BJ (cell line): ENCODE measurements at regions of chr5 and their contacts with region 1.

Region 1: GRCh38 chr5:32232441-32233219 is 58.5 kb upstream of the GOLPH3 start:
- DNase-seq: no peak
- H3K4me3 ChIP-seq: no peak overlapping the region
- H3K27me3 ChIP-seq: no peaks in the 10 kb centered on the region
- CTCF ChIP-seq: peak; percentile 78

Region 2: DNA sequence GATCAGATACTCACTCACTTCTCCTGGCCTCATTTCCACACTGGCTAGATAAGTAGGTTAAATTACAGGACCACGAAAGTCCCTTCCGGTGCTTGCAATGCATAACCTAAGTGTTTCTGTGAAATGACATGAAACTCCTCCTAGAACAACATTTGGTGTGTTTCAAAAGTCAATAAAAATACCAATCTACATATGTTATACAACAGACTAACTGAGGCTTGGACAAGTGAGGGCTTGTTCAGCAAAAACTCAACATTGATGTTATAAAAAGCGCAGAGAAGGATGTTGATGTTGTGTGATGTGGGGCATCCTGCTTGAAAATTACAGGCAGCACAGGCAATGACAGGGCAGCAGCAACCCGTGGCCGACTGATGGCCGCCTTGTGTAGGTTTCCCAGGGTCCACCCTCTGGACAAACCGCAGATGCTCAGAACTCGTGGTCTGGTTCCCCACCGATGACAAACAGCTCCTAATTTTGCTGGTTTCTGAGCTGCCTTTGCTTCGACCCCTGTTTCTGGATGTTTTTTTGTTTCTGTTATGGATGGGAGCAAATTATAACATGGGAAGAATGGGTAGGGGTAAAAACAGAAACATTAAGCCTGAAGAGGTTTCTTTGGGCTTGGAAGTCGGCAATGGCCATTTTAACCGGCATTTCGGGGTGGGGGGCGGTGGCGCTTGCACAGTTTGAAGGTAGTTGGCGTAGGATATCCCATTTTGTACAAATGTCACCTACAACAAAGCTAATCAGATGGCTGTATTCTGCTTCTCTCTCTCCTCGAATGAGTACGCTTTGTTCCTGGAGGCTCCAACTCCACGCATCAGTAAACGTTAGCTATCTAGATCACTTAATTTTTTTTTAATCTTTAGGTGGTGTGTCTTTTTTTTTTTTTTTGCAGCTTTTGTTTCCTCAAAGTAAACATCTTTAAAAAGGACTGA is 477.6 kb before region 1 on chr5:
- CTCF ChIA-PET with region 1: no interaction called
- POLR2A ChIA-PET with region 1: no interaction called
- DNase-seq: no peak
- H3K4me3 ChIP-seq: no peak overlapping the region
- H3K27me3 ChIP-seq: peaks cover 5% of the 10 kb centered on the region
- CTCF ChIP-seq: no peak

Region 3: GRCh38 chr5:32163785-32164184 is 68.8 kb before region 1 on chr5:
- CTCF ChIA-PET with region 1: no interaction called
- POLR2A ChIA-PET with region 1: no interaction called
- DNase-seq: no peak
- H3K4me3 ChIP-seq: no peak overlapping the region
- H3K27me3 ChIP-seq: no peaks in the 10 kb centered on the region
- CTCF ChIP-seq: no peak

Region 4: DNA sequence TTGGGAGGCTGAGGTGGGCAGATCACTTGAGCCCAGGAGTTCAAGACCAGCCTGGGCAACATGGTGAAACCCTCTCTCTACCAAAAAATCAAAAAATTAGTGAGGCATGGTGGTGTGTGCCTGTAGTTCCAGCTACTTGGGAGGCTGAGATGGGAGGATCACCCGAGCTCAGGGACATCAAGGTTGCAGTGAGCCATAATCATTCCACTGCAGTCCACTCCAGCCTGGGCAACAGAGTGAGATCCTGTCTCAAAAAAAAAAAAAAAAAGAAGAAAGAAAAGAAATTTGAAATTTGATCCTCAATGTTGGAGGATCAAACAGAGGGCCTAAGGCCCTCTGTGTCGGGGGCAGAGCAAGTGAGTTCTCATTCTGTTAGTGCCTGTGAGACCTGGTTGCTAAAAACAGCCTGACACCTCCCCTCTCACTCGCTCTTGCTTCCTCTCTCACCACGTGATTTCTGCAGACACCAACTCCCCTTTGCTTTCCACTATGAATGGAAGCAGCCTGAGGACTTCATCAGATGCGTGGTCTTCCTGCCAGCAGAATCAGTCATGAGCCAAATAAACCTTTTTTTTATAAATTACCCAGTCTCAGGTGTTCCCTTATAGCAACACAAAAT is 50.1 kb before region 1 on chr5:
- CTCF ChIA-PET with region 1: no interaction called
- POLR2A ChIA-PET with region 1: interaction called, 13 read pairs
- DNase-seq: no peak
- H3K4me3 ChIP-seq: no peak overlapping the region
- H3K27me3 ChIP-seq: no peaks in the 10 kb centered on the region
- CTCF ChIP-seq: no peak

Region 5: GRCh38 chr5:32259033-32259432 is 26.4 kb after region 1 on chr5:
- CTCF ChIA-PET with region 1: interaction called, 11 read pairs
- POLR2A ChIA-PET with region 1: no interaction called
- DNase-seq: no peak
- H3K4me3 ChIP-seq: no peak overlapping the region
- H3K27me3 ChIP-seq: no peaks in the 10 kb centered on the region
- CTCF ChIP-seq: no peak

Region 6: GRCh38 chr5:32276173-32276853 is 43.7 kb after region 1 on chr5:
- CTCF ChIA-PET with region 1: interaction called, 11 read pairs
- POLR2A ChIA-PET with region 1: no interaction called
- DNase-seq: no peak
- H3K4me3 ChIP-seq: no peak overlapping the region
- H3K27me3 ChIP-seq: no peaks in the 10 kb centered on the region
- CTCF ChIP-seq: no peak

Region 7: DNA sequence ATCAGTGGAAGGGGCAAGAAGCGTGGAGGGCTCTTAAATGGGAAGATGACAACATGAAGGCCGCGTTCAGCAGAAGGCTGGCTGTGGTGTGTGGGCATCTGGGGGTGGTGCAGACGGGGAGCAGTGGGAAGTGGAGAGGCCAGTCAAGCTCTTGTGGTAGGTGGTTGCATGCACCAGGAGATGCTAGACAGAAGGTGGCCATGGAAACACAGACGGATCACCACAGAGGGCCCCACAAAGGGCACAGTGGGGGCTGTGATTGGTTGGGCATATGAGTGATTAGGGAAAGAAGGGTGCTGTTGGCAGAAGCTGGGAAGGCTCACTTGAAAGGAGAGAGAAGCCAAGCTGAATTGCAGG is 65.4 kb after region 1 on chr5:
- CTCF ChIA-PET with region 1: interaction called, 3 read pairs
- POLR2A ChIA-PET with region 1: interaction called, 12 read pairs
- DNase-seq: no peak
- H3K4me3 ChIP-seq: no peak overlapping the region
- H3K27me3 ChIP-seq: no peaks in the 10 kb centered on the region
- CTCF ChIP-seq: no peak

Region 8: DNA sequence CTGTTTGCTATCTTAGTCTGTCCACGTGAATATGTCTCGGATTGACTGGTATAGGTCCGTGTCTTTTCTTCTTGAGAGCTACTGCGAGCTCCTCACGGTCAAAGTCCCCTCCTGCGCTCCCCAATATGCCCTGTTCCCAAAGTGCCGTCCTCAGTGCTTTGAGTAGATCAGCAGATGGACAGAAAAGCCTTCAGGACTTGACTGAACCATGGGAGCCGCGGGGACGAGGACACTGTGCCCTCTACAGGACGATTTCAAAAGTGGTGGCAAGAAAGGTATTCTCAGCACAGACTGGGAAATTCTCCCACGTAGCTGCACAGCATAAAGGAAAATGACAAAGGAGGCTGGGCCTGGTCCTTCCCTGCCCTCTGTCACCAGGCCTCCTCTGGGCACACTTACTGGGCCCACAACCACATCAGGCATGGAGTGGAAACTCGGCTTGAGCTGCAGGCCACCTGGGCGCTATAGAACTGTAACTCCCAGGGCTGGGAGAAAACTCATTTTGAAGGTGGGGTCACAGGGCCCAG is 96.7 kb after region 1 on chr5:
- CTCF ChIA-PET with region 1: interaction called, 145 read pairs
- POLR2A ChIA-PET with region 1: no interaction called
- DNase-seq: no peak
- H3K4me3 ChIP-seq: no peak overlapping the region
- H3K27me3 ChIP-seq: no peaks in the 10 kb centered on the region
- CTCF ChIP-seq: peak; percentile 80

Region 9: GRCh38 chr5:32585446-32586275 is 353.0 kb after region 1 on chr5 and contains the start of gene SUB1:
- CTCF ChIA-PET with region 1: interaction called, 12 read pairs
- POLR2A ChIA-PET with region 1: no interaction called
- DNase-seq: peak; percentile 47
- H3K4me3 ChIP-seq: peak within 1 kb of the TSS; percentile 97
- H3K27me3 ChIP-seq: no peaks in the 10 kb centered on the region
- CTCF ChIP-seq: peak; percentile 24; the same call in 1 of the 2 replicates
- polyA plus RNA-seq, gene SUB1: 46.8 and 152 TPM in 2 replicates